ENCODE measurements at regions of chr2 and their contacts with region 1.

Region 1: GRCh38 chr2:86440631-86441391 is at the start of gene KDM3A:
- DNase-seq: peak; percentile 99
- H3K4me3 ChIP-seq: peak within 1 kb of the TSS; percentile 90
- H3K27ac ChIP-seq: peak within 1 kb of the TSS; percentile 100
- H3K27me3 ChIP-seq: no peaks in the 10 kb centered on the region
- CTCF ChIP-seq: no peak
- polyA plus RNA-seq, gene KDM3A: 24.2 and 33.0 TPM in 2 replicates

Region 2: GRCh38 chr2:86171295-86171694 is 269.5 kb before region 1 on chr2:
- CTCF ChIA-PET with region 1: no interaction called
- POLR2A ChIA-PET with region 1: interaction called, 14 read pairs
- DNase-seq: no peak
- H3K4me3 ChIP-seq: no peak overlapping the region
- H3K27ac ChIP-seq: no peak overlapping the region
- H3K27me3 ChIP-seq: no peaks in the 10 kb centered on the region
- CTCF ChIP-seq: no peak

Region 3: GRCh38 chr2:86195055-86195807 is 245.6 kb before region 1 on chr2 and contains the start of gene IMMT:
- CTCF ChIA-PET with region 1: no interaction called
- POLR2A ChIA-PET with region 1: interaction called, 15 read pairs
- DNase-seq: peak; percentile 92
- H3K4me3 ChIP-seq: peak within 1 kb of the TSS; percentile 99
- H3K27ac ChIP-seq: peak within 1 kb of the TSS; percentile 100
- H3K27me3 ChIP-seq: no peaks in the 10 kb centered on the region
- CTCF ChIP-seq: no peak
- polyA plus RNA-seq, gene IMMT: 68.7 and 69.2 TPM in 2 replicates

Region 4: DNA sequence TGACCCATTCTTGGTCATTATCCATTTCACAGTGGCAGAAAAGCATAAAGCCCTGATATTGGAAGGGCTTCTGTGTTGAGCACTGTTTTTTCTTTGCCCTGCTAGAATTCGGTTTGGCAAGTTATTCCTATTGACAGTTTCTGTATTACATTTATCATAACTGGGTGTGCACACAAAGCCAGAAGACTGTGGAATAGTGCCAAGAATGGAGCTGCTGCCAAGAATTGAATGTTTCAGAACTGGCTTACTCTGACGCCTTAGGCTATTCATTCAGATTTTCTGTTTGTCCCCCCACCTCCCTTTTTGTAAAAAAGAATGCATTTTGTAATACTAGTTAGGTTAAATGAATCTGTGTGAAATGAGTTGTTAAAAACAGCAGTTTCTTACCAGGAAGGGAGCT is 13.0 kb after region 1 on chr2:
- CTCF ChIA-PET with region 1: interaction called, 3 read pairs
- POLR2A ChIA-PET with region 1: interaction called, 11 read pairs
- DNase-seq: no peak
- H3K4me3 ChIP-seq: no peak overlapping the region
- H3K27ac ChIP-seq: no peak overlapping the region
- H3K27me3 ChIP-seq: no peaks in the 10 kb centered on the region
- CTCF ChIP-seq: no peak

Region 5: GRCh38 chr2:86518481-86518880 is 77.7 kb after region 1 on chr2:
- CTCF ChIA-PET with region 1: no interaction called
- POLR2A ChIA-PET with region 1: no interaction called
- DNase-seq: no peak
- H3K4me3 ChIP-seq: no peak overlapping the region
- H3K27ac ChIP-seq: no peak overlapping the region
- H3K27me3 ChIP-seq: no peaks in the 10 kb centered on the region
- CTCF ChIP-seq: peak; percentile 34

Region 6: DNA sequence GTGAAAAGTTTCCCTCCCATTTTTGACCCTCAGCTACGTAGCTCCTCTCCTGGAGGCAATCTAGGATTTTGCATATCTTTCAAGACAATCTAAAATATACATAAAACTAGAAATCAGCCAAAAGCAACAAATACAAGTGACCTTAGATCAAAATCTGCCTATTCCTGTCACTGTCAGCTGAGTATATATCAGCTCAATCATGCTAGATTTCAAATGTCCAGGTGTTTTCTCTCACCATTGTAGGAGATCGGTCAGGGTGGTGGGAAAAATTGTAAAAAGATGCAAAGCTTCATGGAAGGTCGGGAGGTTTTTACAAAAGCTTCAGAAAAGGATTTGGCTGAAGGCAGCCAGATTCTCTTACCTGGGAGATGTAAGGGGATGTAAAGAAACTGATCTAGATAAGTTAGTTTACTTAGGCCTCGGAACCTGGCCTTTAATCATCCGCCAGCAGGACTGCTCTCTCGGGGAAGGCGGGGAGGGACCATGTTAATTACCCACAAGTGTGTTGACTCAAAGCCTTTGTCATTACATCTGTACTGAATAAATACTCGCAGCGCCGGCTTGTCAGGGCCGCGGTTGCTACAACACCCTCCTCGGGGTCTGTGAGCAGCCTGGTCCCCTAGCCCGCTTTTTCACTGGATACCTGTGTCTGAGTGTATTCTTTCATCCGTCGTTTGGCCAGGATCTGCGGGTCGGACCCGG is 115.5 kb after region 1 on chr2:
- CTCF ChIA-PET with region 1: no interaction called
- POLR2A ChIA-PET with region 1: no interaction called
- DNase-seq: no peak
- H3K4me3 ChIP-seq: no peak overlapping the region
- H3K27ac ChIP-seq: no peak overlapping the region
- H3K27me3 ChIP-seq: no peaks in the 10 kb centered on the region
- CTCF ChIP-seq: no peak